Natural killer cell (primary cell): ENCODE measurements at regions of chr3 and their contacts with region 1.

Region 1: GRCh38 chr3:4986782-4987537 is 7.7 kb downstream of the BHLHE40 start:
- DNase-seq: peak; percentile 79 to 82
- ATAC-seq: peak; percentile 69 to 88 (median 71)
- H3K4me3 ChIP-seq: peak overlapping the region; percentile 50
- H3K4me3 Mint-ChIP-seq: peak overlapping the region; percentile 87
- H3K27ac ChIP-seq: peak overlapping the region; percentile 85
- H3K27ac Mint-ChIP-seq: peak overlapping the region; percentile 98 to 100
- H3K4me1 ChIP-seq: peaks cover 54% of the 10 kb centered on the region
- H3K4me1 Mint-ChIP-seq: peaks cover 51 to 59% of the 10 kb centered on the region in 2 donors
- H3K27me3 ChIP-seq: no peaks in the 10 kb centered on the region
- H3K27me3 Mint-ChIP-seq: no peaks in the 10 kb centered on the region
- CTCF ChIP-seq: no peak

Region 2: GRCh38 chr3:4107430-4107829 is 879.5 kb before region 1 on chr3:
- intact Hi-C with region 1: no loop called
- DNase-seq: no peak
- ATAC-seq: no peak
- H3K4me3 ChIP-seq: no peak overlapping the region
- H3K4me3 Mint-ChIP-seq: no peak overlapping the region
- H3K27ac ChIP-seq: no peak overlapping the region
- H3K27ac Mint-ChIP-seq: no peak overlapping the region
- H3K4me1 ChIP-seq: no peaks in the 10 kb centered on the region
- H3K4me1 Mint-ChIP-seq: no peaks in the 10 kb centered on the region
- H3K27me3 ChIP-seq: no peaks in the 10 kb centered on the region
- H3K27me3 Mint-ChIP-seq: peaks cover 0 to 2% of the 10 kb centered on the region in 2 donors
- CTCF ChIP-seq: no peak

Region 3: GRCh38 chr3:5026331-5027218 is 39.6 kb after region 1 on chr3:
- intact Hi-C with region 1: loop called (anchors 2 kb)
- DNase-seq: peak; percentile 73 to 82
- ATAC-seq: peak; percentile 79 to 91 (median 86)
- H3K4me3 ChIP-seq: peak overlapping the region; percentile 75
- H3K4me3 Mint-ChIP-seq: peak overlapping the region; percentile 89
- H3K27ac ChIP-seq: peak overlapping the region; percentile 84
- H3K27ac Mint-ChIP-seq: peak overlapping the region; percentile 86 to 92
- H3K4me1 ChIP-seq: peaks cover 17% of the 10 kb centered on the region
- H3K4me1 Mint-ChIP-seq: peaks cover 9 to 15% of the 10 kb centered on the region in 2 donors
- H3K27me3 ChIP-seq: no peaks in the 10 kb centered on the region
- H3K27me3 Mint-ChIP-seq: peaks cover 0 to 2% of the 10 kb centered on the region in 2 donors
- CTCF ChIP-seq: peak; percentile 61